Breast epithelium (tissue), 4 donors: ENCODE measurements at regions of chr1 and their contacts with region 1.

Region 1: GRCh38 chr1:41006942-41007865 is 14.3 kb downstream of the SLFNL1 start:
- DNase-seq: peak in 1 of 2 donors; percentile 43
- H3K4me3 ChIP-seq: no peak overlapping the region
- H3K27ac ChIP-seq: peak overlapping the region; percentile 22 to 38
- H3K4me1 ChIP-seq: peaks cover 5% of the 10 kb centered on the region in 2 donors
- H3K27me3 ChIP-seq: no peaks in the 10 kb centered on the region
- CTCF ChIP-seq: no peak
- POLR2A ChIP-seq: no peak

Region 2: DNA sequence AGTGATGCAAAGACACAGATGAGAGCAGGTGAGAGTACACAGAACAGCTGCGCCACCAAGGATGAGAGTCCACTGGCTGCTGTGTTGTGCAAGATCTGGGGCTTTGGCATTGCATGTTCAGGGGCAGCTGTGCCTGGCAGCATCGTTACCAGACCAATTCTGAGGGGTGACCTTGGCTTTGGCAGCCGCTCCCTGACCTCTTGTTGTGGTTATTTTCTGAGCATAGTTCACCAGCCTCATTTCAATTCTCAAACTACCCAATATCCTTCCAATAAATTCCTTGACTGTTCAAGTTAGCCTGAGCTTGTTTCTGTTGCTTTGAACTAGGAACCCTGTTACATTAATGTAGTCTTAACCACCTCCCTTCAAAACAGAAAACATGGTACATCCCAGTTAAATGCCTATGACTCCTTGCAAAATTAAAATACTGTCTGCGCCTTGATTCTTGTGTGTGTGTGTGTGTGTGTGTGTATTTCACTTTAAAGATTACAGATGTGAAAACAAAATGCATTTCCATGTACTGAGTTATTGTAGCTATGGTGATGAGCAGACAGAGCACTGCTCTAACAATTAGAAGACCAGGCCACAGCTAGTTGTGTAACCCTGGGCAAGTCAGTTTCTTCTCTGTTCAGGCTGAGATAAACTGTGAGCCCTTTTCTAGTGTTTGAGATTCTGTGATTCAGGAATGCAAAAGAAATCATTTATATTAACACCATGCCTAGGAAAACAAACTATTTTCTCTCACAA is 1039.7 kb after region 1 on chr1:
- intact Hi-C with region 1: loop called (anchors 5 kb)
- DNase-seq: no peak
- H3K4me3 ChIP-seq: no peak overlapping the region
- H3K27ac ChIP-seq: no peak overlapping the region
- H3K4me1 ChIP-seq: no peaks in the 10 kb centered on the region
- H3K27me3 ChIP-seq: no peaks in the 10 kb centered on the region
- CTCF ChIP-seq: no peak
- POLR2A ChIP-seq: no peak